Left colon (tissue), 2 donors: ENCODE measurements at regions of chr20 and their contacts with region 1.

Region 1: DNA sequence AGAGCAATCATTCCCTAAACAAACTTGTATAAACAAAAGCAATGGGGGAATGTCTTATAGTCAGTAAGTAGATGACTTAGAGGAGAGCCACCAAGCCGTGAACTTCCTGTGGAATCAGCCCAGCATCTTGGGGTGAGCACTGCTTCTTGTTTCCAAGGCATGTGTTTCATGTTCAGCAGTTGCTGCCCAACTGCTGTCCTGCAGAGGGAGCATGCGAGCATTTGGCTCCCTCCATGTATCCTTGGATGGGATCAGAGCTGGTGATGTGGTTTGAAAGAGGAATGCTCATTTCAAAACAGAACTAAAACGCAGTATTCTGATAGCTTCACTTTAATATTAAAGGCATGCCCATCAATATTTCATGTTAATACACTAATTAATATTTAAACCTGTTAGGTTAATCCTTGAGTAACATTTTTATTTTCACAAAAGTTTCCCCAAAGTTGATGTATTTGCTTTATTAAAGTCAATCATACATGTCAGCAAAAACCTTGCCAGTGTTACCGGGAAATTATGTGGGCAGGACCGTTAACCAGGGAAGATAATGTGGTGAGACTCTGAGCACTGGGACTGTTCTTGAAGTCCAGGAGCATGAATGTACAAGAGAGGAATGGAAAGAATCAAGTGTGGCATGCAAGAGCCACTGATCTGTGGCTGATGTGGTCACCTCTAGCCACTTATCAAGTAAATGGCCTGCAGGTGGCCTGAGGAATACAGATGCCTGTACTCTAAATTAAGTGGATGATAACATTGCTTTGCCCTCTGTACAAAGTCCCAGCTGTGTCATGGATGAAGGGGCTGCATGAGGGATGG is 172.2 kb upstream of the GGTLC1 start:
- DNase-seq: peak in 1 of 2 donors; percentile 51
- ATAC-seq: peak; percentile 57

Region 2: GRCh38 chr20:24403406-24403805 is 242.6 kb after region 1 on chr20:
- intact Hi-C with region 1: no loop called
- DNase-seq: no peak
- ATAC-seq: no peak

Region 3: GRCh38 chr20:24917797-24918578 is 757.2 kb after region 1 on chr20:
- intact Hi-C with region 1: loop called in 1 of 2 experiments (anchors 10 kb)
- DNase-seq: peak in 1 of 2 donors; percentile 78
- ATAC-seq: peak; percentile 84